ENCODE measurements at regions of chr20 and their contacts with region 1.

Region 1: GRCh38 chr20:43448748-43449535 is 8.8 kb upstream of the SRSF6 start:
- DNase-seq: peak; percentile 72
- H3K4me3 ChIP-seq: no peak overlapping the region
- H3K27ac ChIP-seq: no peak overlapping the region
- H3K4me1 ChIP-seq: no peaks in the 10 kb centered on the region
- H3K27me3 ChIP-seq: no peaks in the 10 kb centered on the region
- CTCF ChIP-seq: peak; percentile 77

Region 2: GRCh38 chr20:43263226-43263625 is 185.7 kb before region 1 on chr20:
- CTCF ChIA-PET with region 1: no interaction called
- POLR2A ChIA-PET with region 1: no interaction called
- intact Hi-C with region 1: no loop called
- DNase-seq: no peak
- H3K4me3 ChIP-seq: no peak overlapping the region
- H3K27ac ChIP-seq: no peak overlapping the region
- H3K4me1 ChIP-seq: no peaks in the 10 kb centered on the region
- H3K27me3 ChIP-seq: peaks cover 33% of the 10 kb centered on the region
- CTCF ChIP-seq: no peak

Region 3: GRCh38 chr20:43463864-43464785 is 15.2 kb after region 1 on chr20:
- CTCF ChIA-PET with region 1: interaction called, 11 read pairs
- POLR2A ChIA-PET with region 1: no interaction called
- intact Hi-C with region 1: no loop called
- DNase-seq: no peak
- H3K4me3 ChIP-seq: no peak overlapping the region
- H3K27ac ChIP-seq: no peak overlapping the region
- H3K4me1 ChIP-seq: peaks cover 6% of the 10 kb centered on the region
- H3K27me3 ChIP-seq: no peaks in the 10 kb centered on the region
- CTCF ChIP-seq: no peak

Region 4: GRCh38 chr20:43691928-43692524 is 243.1 kb after region 1 on chr20:
- CTCF ChIA-PET with region 1: no interaction called
- POLR2A ChIA-PET with region 1: no interaction called
- intact Hi-C with region 1: loop called (anchors 5 kb)
- DNase-seq: peak; percentile 51
- H3K4me3 ChIP-seq: no peak overlapping the region
- H3K27ac ChIP-seq: no peak overlapping the region
- H3K4me1 ChIP-seq: no peaks in the 10 kb centered on the region
- H3K27me3 ChIP-seq: no peaks in the 10 kb centered on the region
- CTCF ChIP-seq: peak; percentile 69

Region 5: DNA sequence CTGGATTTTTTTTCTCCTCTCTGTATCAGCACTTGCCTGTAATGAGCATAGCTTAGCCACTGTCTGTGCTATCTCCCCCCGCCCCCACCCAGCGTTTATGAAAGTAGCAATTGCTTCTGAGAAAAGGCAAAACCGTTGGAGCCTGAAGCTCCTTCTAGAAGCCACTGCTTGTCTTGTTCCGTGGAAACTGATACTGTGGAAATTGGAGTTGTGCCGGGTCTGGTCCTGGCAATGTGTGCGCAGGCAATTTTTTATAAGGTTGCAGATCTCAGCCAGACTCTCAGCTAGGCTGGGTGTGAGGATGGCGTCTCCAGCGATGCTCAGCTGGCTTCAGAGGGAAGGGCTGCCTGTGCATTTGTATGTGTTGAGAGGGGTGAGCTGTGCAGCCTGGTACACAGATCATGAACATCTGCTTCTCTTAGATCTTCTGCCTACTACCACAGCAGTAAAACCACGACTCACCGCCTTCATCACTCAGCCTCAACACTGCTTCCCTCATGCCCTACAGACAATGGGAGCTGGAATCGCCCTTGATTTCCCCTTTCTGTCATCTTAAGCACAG is 350.3 kb after region 1 on chr20:
- CTCF ChIA-PET with region 1: no interaction called
- POLR2A ChIA-PET with region 1: no interaction called
- intact Hi-C with region 1: no loop called
- DNase-seq: no peak
- H3K4me3 ChIP-seq: no peak overlapping the region
- H3K27ac ChIP-seq: no peak overlapping the region
- H3K4me1 ChIP-seq: no peaks in the 10 kb centered on the region
- H3K27me3 ChIP-seq: no peaks in the 10 kb centered on the region
- CTCF ChIP-seq: no peak

Region 6: GRCh38 chr20:44080646-44081267 is 631.8 kb after region 1 on chr20:
- CTCF ChIA-PET with region 1: no interaction called
- POLR2A ChIA-PET with region 1: no interaction called
- intact Hi-C with region 1: loop called (anchors 5 kb)
- DNase-seq: peak; percentile 84
- H3K4me3 ChIP-seq: no peak overlapping the region
- H3K27ac ChIP-seq: peak overlapping the region; percentile 4
- H3K4me1 ChIP-seq: peaks cover 6% of the 10 kb centered on the region
- H3K27me3 ChIP-seq: no peaks in the 10 kb centered on the region
- CTCF ChIP-seq: peak; percentile 98

Region 7: GRCh38 chr20:44187051-44187762 is 738.3 kb after region 1 on chr20 and contains the start of gene JPH2:
- CTCF ChIA-PET with region 1: interaction called, 3 read pairs
- POLR2A ChIA-PET with region 1: no interaction called
- intact Hi-C with region 1: loop called (anchors 2 kb)
- DNase-seq: no peak
- H3K4me3 ChIP-seq: peak within 1 kb of the TSS; percentile 47
- H3K27ac ChIP-seq: no peak within 1 kb of the TSS
- H3K4me1 ChIP-seq: peaks cover 2% of the 10 kb centered on the region
- H3K27me3 ChIP-seq: no peaks in the 10 kb centered on the region
- CTCF ChIP-seq: no peak
- total RNA-seq, gene JPH2: 1.0 and 1.1 TPM in 2 replicates